Spleen (tissue), 13 donors: ENCODE measurements at regions of chr18 and their contacts with region 1.

Region 1: DNA sequence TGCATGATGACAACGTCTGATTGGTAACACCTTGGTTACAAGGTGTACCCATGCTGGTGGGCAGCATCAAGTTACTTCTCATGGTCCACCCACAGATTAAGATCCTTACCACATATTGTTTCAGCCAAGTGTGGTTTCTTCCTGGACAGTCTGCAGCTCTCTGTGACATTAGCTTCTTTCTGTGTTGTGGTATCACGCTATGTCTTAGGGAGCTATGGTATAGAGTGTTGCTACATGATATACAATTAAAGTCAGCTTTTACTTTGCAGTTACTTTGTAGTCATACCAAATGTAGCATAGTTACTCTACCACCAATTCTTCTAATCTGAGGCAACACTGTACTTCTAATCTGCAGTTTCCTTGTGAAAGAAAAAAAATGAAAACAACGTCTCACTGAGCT is 48.8 kb downstream of the ZCCHC2 start:
- DNase-seq: no peak
- H3K4me3 ChIP-seq: no peak overlapping the region
- H3K27ac ChIP-seq: no peak overlapping the region
- H3K4me1 ChIP-seq: peaks cover 0 to 10% (median 0%) of the 10 kb centered on the region in 6 donors
- H3K27me3 ChIP-seq: no peaks in the 10 kb centered on the region
- CTCF ChIP-seq: no peak
- POLR2A ChIP-seq: no peak

Region 2: DNA sequence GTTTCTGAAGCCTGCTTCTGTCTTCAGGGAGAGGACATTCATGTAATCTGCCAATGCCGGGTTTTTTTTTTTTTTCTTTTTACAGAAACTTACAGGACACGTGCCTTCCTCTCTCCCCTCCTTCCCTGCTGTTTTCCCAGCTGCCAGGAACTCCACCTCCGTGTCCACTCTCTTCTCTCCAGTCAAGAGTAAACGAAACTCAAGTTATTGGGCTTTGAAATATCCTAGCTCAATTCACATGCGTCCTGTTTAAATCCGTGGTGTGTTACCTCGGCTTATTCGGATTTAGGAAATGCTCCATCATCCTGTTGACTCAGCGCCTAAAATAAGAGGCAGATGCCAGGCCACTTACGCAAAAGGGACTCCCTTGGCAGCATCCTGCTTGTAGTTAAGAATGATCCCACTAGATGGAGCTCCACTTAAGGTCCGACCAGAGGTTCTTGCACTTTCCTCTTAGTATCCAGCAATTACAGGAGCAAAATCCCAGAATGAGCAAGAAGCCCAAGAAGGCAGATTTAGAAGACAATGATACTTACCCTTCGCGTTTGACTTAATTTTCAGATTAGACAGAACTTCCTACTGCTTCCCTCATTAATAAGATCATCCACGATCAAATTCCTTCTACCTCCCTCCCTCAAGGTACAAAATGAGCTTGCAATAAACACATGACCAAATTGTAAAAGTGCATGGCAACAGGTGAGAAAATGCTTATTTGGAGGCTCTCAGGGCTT is 146.0 kb before region 1 on chr18:
- intact Hi-C with region 1: loop called (anchors 5 kb)
- DNase-seq: no peak
- H3K4me3 ChIP-seq: peak overlapping the region in 2 of 8 donors; percentile 15 to 44
- H3K27ac ChIP-seq: peak overlapping the region; percentile 22 to 82 (median 77)
- H3K4me1 ChIP-seq: peaks cover 0 to 38% (median 20%) of the 10 kb centered on the region in 6 donors
- H3K27me3 ChIP-seq: no peaks in the 10 kb centered on the region
- CTCF ChIP-seq: peak; percentile 72 to 94 (median 86)
- POLR2A ChIP-seq: no peak

Region 3: GRCh38 chr18:62838475-62839098 is 266.9 kb after region 1 on chr18:
- intact Hi-C with region 1: no loop called
- DNase-seq: no peak
- H3K4me3 ChIP-seq: no peak overlapping the region
- H3K27ac ChIP-seq: no peak overlapping the region
- H3K4me1 ChIP-seq: peaks cover 0 to 5% (median 0%) of the 10 kb centered on the region in 6 donors
- H3K27me3 ChIP-seq: no peaks in the 10 kb centered on the region
- CTCF ChIP-seq: no peak
- POLR2A ChIP-seq: no peak